Posterior vena cava (tissue), 2 donors: ENCODE measurements at regions of chr1 and their contacts with region 1.

Region 1: DNA sequence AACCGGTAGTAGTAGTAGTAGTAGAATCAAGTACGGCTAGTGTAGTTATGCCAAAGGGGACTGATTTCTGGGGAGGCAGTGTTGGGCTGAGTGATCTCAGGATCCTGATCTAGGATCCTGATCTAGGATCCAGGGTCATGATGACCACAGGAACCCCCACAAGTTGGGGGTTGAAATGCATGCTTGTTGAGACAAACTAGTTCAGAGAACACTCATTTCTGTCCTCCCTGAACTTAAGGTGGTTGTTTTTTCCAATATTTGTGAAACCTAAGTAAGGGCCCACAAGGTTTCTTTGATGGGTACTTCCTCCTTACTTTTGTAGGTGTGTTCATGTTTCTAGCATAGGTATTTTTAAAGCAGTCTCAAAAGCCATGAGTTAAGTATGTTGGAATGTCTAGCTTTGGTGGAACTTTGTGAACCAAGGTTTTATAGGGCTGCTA is 33.9 kb upstream of the PDC start:
- DNase-seq: no peak

Region 2: GRCh38 chr1:186535388-186536133 is 40.7 kb after region 1 on chr1:
- intact Hi-C with region 1: no loop called
- DNase-seq: no peak

Region 3: GRCh38 chr1:186626356-186626932 is 131.6 kb after region 1 on chr1:
- intact Hi-C with region 1: loop called in 1 of 2 experiments (anchors 5 kb)
- DNase-seq: no peak

Region 4: GRCh38 chr1:186915555-186915954 is 420.7 kb after region 1 on chr1:
- intact Hi-C with region 1: loop called in 1 of 2 experiments (anchors 5 kb)
- DNase-seq: no peak